ENCODE measurements at regions of chr17 and their contacts with region 1.

Region 1: DNA sequence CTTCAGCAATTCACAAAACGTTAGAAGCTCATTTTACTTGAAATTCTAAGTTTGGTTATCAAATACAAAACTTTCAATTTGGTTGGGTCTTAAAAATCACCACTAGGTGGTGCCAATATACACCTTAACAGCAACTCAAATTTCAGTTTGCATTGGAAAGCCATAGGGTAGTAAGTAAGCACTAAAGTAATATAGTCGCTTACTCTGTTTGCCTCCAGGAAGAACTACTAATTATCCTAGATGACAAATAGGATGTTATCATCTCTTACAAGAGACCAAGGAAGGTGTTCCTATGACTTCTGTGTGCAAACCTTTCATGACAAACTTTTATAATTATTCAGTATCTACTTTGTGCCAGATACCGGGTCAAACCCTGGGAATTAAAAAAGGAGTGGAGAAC is 93.3 kb downstream of the MYO1D start:
- DNase-seq: no peak
- H3K4me3 ChIP-seq: no peak overlapping the region
- H3K27ac ChIP-seq: no peak overlapping the region
- H3K4me1 ChIP-seq: no peaks in the 10 kb centered on the region
- H3K27me3 ChIP-seq: no peaks in the 10 kb centered on the region
- CTCF ChIP-seq: peak; percentile 70 to 91 (median 81)
- EP300 ChIP-seq: no peak
- POLR2A ChIP-seq: no peak

Region 2: GRCh38 chr17:32997753-32998632 is 214.4 kb after region 1 on chr17:
- intact Hi-C with region 1: loop called in 2 of 4 experiments (anchors 5 to 10 kb)
- DNase-seq: peak; percentile 80 to 89 (median 85)
- H3K4me3 ChIP-seq: no peak overlapping the region
- H3K27ac ChIP-seq: no peak overlapping the region
- H3K4me1 ChIP-seq: peaks cover 4% of the 10 kb centered on the region
- H3K27me3 ChIP-seq: no peaks in the 10 kb centered on the region
- CTCF ChIP-seq: peak; percentile 66 to 82 (median 68)
- EP300 ChIP-seq: no peak
- POLR2A ChIP-seq: no peak